AG04450 (cell line): ENCODE measurements at regions of chr17 and their contacts with region 1.

Region 1: DNA sequence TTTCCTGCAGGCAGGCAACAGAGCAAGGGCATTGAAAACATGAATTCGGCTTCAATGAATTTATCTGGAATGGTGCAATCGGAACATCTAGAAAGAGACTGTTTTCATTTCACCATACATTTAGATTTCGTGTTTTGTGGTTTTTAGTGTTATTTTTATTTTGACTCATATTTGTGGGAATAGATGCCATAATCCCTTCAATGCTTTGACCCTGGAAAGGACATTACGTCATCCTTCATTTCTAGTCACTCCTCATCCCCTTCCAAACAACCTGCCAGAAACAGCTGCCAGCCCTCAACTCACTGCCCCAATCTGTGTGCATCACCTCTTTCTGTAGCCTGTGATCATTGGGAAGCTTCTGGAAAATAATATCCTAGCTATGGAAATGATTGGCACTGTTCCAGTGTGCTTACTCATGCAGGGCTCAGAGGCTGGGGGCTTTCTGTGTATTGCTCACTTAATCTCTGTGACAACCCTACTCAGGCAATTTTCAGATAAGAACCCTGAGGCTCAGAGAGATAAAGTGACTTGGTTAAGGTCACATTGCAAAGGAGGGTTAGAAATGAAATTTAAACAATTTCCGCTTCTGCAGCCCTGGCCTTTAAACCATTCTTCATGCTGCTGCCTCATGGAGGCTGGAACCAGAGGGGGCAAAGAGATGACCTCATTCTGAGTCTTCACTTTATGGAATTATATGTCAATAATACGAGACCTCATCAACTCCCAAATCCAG is 9.5 kb upstream of the KSR1 start:
- DNase-seq: peak; percentile 99
- H3K4me3 ChIP-seq: no peak overlapping the region
- H3K27ac ChIP-seq: peak overlapping the region; percentile 68
- H3K27me3 ChIP-seq: peaks cover 2% of the 10 kb centered on the region
- CTCF ChIP-seq: no peak

Region 2: GRCh38 chr17:27323524-27324206 is 123.1 kb before region 1 on chr17:
- CTCF ChIA-PET with region 1: no interaction called
- POLR2A ChIA-PET with region 1: no interaction called
- DNase-seq: no peak
- H3K4me3 ChIP-seq: no peak overlapping the region
- H3K27ac ChIP-seq: no peak overlapping the region
- H3K27me3 ChIP-seq: no peaks in the 10 kb centered on the region
- CTCF ChIP-seq: no peak

Region 3: DNA sequence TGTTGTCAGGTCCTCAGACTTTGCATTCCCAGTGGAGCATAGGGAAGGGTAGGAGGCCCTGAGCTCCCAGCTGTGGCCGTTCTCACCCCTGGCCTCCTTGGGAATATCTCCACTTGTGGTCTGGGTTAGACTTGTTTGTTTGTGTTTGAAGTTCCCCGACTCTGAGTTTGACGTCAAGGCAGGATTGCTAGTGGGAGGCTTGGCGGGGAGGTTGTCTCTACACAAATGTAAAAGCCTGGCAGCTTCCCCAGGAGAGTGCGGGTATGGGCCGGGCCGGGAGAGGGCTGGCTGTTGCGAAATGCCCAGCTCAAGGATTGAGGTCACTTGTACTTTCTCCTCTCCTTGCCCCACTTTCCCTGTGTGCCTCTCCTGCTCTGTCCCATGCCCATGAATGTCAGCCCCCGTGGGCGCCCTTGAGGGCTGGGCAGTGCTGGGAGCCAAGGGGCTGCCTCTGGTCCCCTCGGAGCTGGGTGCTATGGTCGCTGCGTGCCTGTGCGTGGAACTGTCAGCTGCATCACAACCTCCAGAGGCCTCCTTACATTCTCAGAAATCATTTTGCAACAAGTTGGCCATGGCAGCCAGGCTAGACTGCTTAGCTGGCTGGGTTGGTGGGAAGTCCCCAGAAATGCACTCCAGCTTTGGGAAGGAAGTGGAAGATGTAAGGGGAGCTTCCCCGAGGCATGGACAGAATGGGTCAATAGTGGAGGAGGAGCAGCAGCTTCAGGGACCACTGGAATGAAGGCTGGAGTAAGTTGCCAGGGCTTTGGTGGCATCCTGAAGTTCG is 93.8 kb after region 1 on chr17:
- CTCF ChIA-PET with region 1: no interaction called
- POLR2A ChIA-PET with region 1: interaction called, 10 read pairs
- DNase-seq: peak; percentile 99
- H3K4me3 ChIP-seq: peak overlapping the region; percentile 48
- H3K27ac ChIP-seq: peak overlapping the region; percentile 95
- H3K27me3 ChIP-seq: no peaks in the 10 kb centered on the region
- CTCF ChIP-seq: no peak